ENCODE measurements at regions of chr3 and their contacts with region 1.

Region 1: DNA sequence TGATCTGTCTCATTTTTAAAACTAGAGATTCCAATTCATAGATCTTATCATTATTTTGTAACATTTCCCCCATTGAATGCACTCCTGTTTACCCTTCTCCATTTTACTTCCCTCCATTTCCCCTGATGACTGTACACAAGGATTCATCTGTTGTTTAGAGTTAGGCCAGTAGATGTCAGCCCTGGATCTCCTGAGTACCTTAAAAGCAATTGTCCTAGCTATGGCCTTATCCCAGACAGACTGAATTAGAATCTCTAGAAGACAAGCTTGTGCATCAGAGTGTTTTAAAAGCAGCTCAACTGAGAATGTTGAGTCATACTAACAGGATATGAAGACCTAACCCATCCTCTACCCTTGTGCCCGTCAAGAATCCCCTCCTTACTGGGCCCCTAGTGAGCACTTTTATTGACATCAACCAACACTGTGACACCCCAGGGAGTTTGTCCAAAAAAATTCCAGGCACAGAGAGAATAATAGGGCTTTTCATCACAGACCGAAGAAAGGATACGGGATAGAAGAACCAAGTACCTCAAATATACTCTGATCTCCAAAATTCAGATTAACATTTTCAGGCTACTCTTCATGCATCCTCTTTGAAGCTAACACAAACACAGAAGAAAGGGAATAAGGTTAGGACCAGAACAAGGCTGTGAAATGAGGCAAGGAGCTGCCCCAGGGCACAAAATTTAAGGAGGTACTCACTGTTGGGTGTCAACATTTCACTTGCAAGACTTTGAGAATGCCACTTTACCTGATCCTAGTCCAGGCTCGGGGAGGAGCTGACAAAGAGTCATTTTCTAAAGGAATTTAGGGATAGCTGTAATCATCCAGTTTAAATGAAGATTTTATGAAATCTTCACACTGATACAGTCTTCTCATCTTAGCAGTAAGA is 17.1 kb downstream of the ZBED2 start:
- DNase-seq: peak; percentile 79 to 83
- ATAC-seq: peak; percentile 92
- H3K4me3 ChIP-seq: no peak overlapping the region
- H3K27ac ChIP-seq: peak overlapping the region; percentile 50 to 73; a peak in 5 of 6 replicates
- H3K4me1 ChIP-seq: peaks cover 46% of the 10 kb centered on the region
- CTCF ChIP-seq: peak; percentile 81
- EP300 ChIP-seq: no peak
- POLR2A ChIP-seq: no peak
- RAD21 ChIP-seq: peak; percentile 92 to 93

Region 2: GRCh38 chr3:111506435-111506834 is 71.6 kb before region 1 on chr3:
- CTCF ChIA-PET with region 1: no interaction called
- POLR2A ChIA-PET with region 1: no interaction called
- DNase-seq: no peak
- ATAC-seq: no peak
- H3K4me3 ChIP-seq: no peak overlapping the region
- H3K27ac ChIP-seq: no peak overlapping the region
- H3K4me1 ChIP-seq: no peaks in the 10 kb centered on the region
- CTCF ChIP-seq: no peak
- EP300 ChIP-seq: no peak
- POLR2A ChIP-seq: no peak
- RAD21 ChIP-seq: no peak

Region 3: GRCh38 chr3:111616417-111617105 is 38.5 kb after region 1 on chr3:
- CTCF ChIA-PET with region 1: interaction called, 18 read pairs
- POLR2A ChIA-PET with region 1: no interaction called
- DNase-seq: peak in 1 of 2 experiments; percentile 59
- ATAC-seq: peak; percentile 23 to 80; a peak in 4 of 6 replicates
- H3K4me3 ChIP-seq: no peak overlapping the region
- H3K27ac ChIP-seq: peak overlapping the region in 1 of 2 experiments; percentile 10; a peak in 1 of 6 replicates
- H3K4me1 ChIP-seq: peaks cover 14% of the 10 kb centered on the region; the same call in 1 of the 3 replicates
- CTCF ChIP-seq: peak; percentile 27; the same call in 2 of the 3 replicates
- EP300 ChIP-seq: no peak
- POLR2A ChIP-seq: no peak
- RAD21 ChIP-seq: peak in 1 of 2 experiments; percentile 52; a peak in 3 of 5 replicates

Region 4: GRCh38 chr3:111681661-111682426 is 103.8 kb after region 1 on chr3:
- CTCF ChIA-PET with region 1: interaction called, 25 read pairs
- POLR2A ChIA-PET with region 1: no interaction called
- DNase-seq: no peak
- ATAC-seq: no peak
- H3K4me3 ChIP-seq: no peak overlapping the region
- H3K27ac ChIP-seq: 0 out of 6 replicates have a peak overlapping the region, but pooled peaks of 1 of the 2 experiments have one; percentile 1
- H3K4me1 ChIP-seq: peaks cover 34% of the 10 kb centered on the region
- CTCF ChIP-seq: no peak
- EP300 ChIP-seq: no peak
- POLR2A ChIP-seq: no peak
- RAD21 ChIP-seq: no peak

Region 5: GRCh38 chr3:111700054-111700453 is 122.0 kb after region 1 on chr3:
- CTCF ChIA-PET with region 1: interaction called, 112 read pairs
- POLR2A ChIA-PET with region 1: no interaction called
- DNase-seq: no peak
- ATAC-seq: no peak
- H3K4me3 ChIP-seq: no peak overlapping the region
- H3K27ac ChIP-seq: no peak overlapping the region
- H3K4me1 ChIP-seq: peaks cover 24% of the 10 kb centered on the region
- CTCF ChIP-seq: no peak
- EP300 ChIP-seq: no peak
- POLR2A ChIP-seq: no peak
- RAD21 ChIP-seq: no peak